Activated CD4-positive, alpha-beta T cell treated with anti-CD3 and anti-CD28 coated beads for 36 hours (primary cell): ENCODE measurements at regions of chr1 and their contacts with region 1.

Region 1: GRCh38 chr1:51622455-51622913 is 5.6 kb downstream of the OSBPL9 start:
- DNase-seq: peak; percentile 35
- ATAC-seq: peak; percentile 55
- H3K4me3 Mint-ChIP-seq: no peak overlapping the region
- H3K27ac Mint-ChIP-seq: no peak overlapping the region
- H3K4me1 Mint-ChIP-seq: peaks cover 37% of the 10 kb centered on the region
- H3K27me3 Mint-ChIP-seq: no peaks in the 10 kb centered on the region

Region 2: GRCh38 chr1:51253691-51254090 is 368.8 kb before region 1 on chr1:
- CTCF ChIA-PET with region 1: no interaction called
- POLR2A ChIA-PET with region 1: no interaction called
- intact Hi-C with region 1: no loop called
- DNase-seq: no peak
- ATAC-seq: no peak
- H3K4me3 Mint-ChIP-seq: no peak overlapping the region
- H3K27ac Mint-ChIP-seq: no peak overlapping the region
- H3K4me1 Mint-ChIP-seq: peaks cover 33% of the 10 kb centered on the region
- H3K27me3 Mint-ChIP-seq: no peaks in the 10 kb centered on the region

Region 3: GRCh38 chr1:51671527-51672325 is 49.2 kb after region 1 on chr1:
- CTCF ChIA-PET with region 1: no interaction called
- POLR2A ChIA-PET with region 1: no interaction called
- intact Hi-C with region 1: loop called in 1 of 2 experiments (anchors 5 kb)
- DNase-seq: no peak
- ATAC-seq: no peak
- H3K4me3 Mint-ChIP-seq: no peak overlapping the region
- H3K27ac Mint-ChIP-seq: no peak overlapping the region
- H3K4me1 Mint-ChIP-seq: no peaks in the 10 kb centered on the region
- H3K27me3 Mint-ChIP-seq: no peaks in the 10 kb centered on the region